CD4-positive, alpha-beta memory T cell (primary cell): ENCODE measurements at regions of chr21 and their contacts with region 1.

Region 1: GRCh38 chr21:33542640-33543504 is at the start of gene SON:
- DNase-seq: peak; percentile 96 to 99 (median 98)
- H3K4me3 ChIP-seq: peak within 1 kb of the TSS; percentile 87 to 96
- H3K4me3 Mint-ChIP-seq: peak within 1 kb of the TSS; percentile 96 to 100 (median 98)
- H3K27ac ChIP-seq: peak within 1 kb of the TSS; percentile 99
- H3K27ac Mint-ChIP-seq: peak within 1 kb of the TSS; percentile 98 to 100 (median 100)
- H3K4me1 ChIP-seq: peaks cover 52% of the 10 kb centered on the region
- H3K4me1 Mint-ChIP-seq: peaks cover 24 to 57% (median 36%) of the 10 kb centered on the region in 4 donors
- H3K27me3 ChIP-seq: no peaks in the 10 kb centered on the region
- H3K27me3 Mint-ChIP-seq: no peaks in the 10 kb centered on the region
- total RNA-seq, gene SON: 436 to 454 TPM

Region 2: DNA sequence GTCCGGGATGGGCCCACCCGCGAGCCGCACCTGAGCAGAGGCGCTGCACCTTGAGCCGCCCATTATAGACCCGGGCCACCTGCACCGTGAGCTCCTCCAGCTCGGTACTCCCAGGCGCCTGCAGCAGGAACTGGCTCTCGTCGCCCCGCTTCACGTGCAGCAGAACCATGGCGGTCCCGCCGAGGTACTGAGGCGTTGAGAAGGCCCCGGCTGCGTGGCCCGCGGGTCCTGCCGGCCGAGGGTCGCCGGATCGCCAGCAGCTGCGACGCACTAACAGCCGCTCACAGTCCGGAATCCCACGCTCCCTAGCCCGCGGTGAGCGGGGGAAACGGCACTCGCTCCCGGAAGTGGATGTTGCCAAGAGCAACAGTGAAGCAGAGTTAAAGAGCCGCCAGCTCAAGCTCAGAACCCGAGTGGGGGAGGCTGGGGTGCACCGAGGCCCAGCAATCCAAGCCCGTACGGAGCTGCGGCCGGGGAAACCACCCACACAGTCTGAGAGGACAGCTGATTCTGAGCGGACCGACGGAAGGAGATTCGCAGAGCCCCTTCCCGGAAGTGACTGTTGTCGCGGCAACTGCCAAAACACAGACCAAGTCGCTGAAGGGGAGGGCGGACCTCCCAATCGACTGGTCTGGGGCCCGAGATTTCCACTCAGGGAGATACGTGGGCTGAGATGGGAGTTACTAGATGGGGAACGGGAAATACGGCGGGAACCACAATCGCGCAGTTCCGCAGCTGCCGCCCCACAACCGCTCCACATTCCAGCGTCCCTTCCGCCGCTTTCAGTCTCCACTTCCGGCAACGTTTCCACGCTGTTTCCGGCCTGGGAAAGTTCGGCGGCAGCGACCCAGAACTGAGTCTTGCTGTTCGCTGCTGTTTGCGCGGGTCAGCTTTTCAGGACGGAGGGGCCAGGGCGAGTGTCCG is 930.5 kb before region 1 on chr21 and contains the start of gene CFAP298:
- CTCF ChIA-PET with region 1: no interaction called
- POLR2A ChIA-PET with region 1: interaction called, 8 read pairs
- intact Hi-C with region 1: loop called (anchors 1 kb)
- DNase-seq: peak; percentile 90 to 97 (median 92)
- H3K4me3 ChIP-seq: peak within 1 kb of the TSS; percentile 95 to 99
- H3K4me3 Mint-ChIP-seq: peak within 1 kb of the TSS; percentile 91 to 98 (median 96)
- H3K27ac ChIP-seq: peak within 1 kb of the TSS; percentile 86
- H3K27ac Mint-ChIP-seq: peak within 1 kb of the TSS; percentile 98 to 99 (median 99)
- H3K4me1 ChIP-seq: peaks cover 12% of the 10 kb centered on the region
- H3K4me1 Mint-ChIP-seq: peaks cover 8 to 32% (median 20%) of the 10 kb centered on the region in 4 donors
- H3K27me3 ChIP-seq: no peaks in the 10 kb centered on the region
- H3K27me3 Mint-ChIP-seq: peaks cover 1 to 2% of the 10 kb centered on the region in 2 donors
- total RNA-seq, gene CFAP298: 29.4 to 39.1 TPM

Region 3: DNA sequence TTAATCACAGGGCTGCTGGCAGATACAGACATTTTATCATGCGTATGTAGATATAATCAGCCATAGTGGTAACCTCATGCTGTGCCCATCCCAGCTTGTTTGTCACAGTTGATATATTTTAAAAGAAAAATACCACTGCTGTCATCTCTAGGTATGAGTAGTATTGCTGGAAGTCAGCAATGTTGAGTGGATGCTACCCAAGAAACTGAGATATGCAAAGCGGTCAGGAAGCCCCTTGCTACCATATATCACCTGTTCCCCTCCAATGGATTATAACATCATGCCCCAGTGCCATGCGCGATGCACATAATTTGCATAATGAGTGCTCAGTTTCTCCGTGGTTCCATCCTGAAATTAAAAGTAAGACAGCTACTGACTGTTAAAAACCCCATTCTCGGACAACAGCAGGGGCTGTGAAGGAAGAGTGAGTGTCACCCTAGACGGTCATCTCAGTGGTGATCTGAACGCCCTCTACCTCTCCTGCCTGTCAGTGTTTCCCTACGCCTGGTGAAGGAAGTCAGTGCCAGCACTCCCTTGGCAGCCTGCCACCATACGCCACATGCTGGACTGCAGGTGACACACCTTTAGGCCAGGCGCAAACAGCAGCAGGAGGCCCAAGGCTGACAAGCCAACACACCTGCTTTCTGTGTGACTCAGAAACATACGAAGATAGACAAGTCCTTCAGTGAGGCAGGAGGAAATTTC is 274.0 kb before region 1 on chr21:
- CTCF ChIA-PET with region 1: no interaction called
- POLR2A ChIA-PET with region 1: no interaction called
- intact Hi-C with region 1: no loop called
- DNase-seq: peak in 4 of 5 donors; percentile 18 to 56 (median 30)
- H3K4me3 ChIP-seq: no peak overlapping the region
- H3K4me3 Mint-ChIP-seq: peak overlapping the region; percentile 6 to 99 (median 78)
- H3K27ac ChIP-seq: peak overlapping the region; percentile 47
- H3K27ac Mint-ChIP-seq: peak overlapping the region; percentile 70 to 97 (median 87)
- H3K4me1 ChIP-seq: peaks cover 47% of the 10 kb centered on the region
- H3K4me1 Mint-ChIP-seq: peaks cover 45 to 76% (median 57%) of the 10 kb centered on the region in 4 donors
- H3K27me3 ChIP-seq: no peaks in the 10 kb centered on the region
- H3K27me3 Mint-ChIP-seq: no peaks in the 10 kb centered on the region

Region 4: DNA sequence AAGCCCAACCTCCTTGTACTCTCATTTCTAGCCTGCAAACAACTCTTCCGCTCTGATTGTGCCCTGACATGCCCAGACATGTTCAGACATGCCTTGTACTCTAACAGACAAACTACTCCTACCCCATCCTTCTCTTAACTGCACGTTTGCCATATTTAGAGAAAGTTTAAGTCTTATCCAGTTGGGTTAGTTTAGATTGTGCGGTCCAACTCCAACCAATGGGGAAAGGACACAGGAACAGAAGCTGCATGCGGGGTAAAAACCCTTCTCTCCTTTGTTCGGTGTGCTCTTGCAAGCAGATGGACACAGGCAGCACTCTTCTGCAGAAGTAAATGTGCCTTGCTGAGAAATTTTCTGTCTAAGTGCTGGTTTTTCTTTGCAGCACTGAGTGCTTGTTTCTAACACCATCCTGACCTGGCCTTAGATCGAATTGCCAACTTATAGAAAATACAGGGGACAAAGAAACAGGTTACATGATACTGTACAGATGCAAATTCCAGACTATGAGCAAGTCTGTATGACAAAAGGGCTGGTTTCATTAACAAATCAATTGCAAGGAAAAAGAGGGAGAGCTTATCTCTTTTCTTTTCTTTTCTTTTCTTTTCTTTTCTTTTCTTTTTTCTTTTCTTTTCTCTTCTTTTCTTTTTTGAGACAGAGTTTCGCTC is 175.4 kb before region 1 on chr21:
- CTCF ChIA-PET with region 1: no interaction called
- POLR2A ChIA-PET with region 1: no interaction called
- intact Hi-C with region 1: no loop called
- DNase-seq: no peak
- H3K4me3 ChIP-seq: no peak overlapping the region
- H3K4me3 Mint-ChIP-seq: no peak overlapping the region
- H3K27ac ChIP-seq: no peak overlapping the region
- H3K27ac Mint-ChIP-seq: no peak overlapping the region
- H3K4me1 ChIP-seq: peaks cover 5% of the 10 kb centered on the region
- H3K4me1 Mint-ChIP-seq: peaks cover 3 to 8% (median 4%) of the 10 kb centered on the region in 4 donors
- H3K27me3 ChIP-seq: no peaks in the 10 kb centered on the region
- H3K27me3 Mint-ChIP-seq: peaks cover 0 to 2% of the 10 kb centered on the region in 2 donors

Region 5: GRCh38 chr21:33380483-33380998 is 162.3 kb before region 1 on chr21:
- CTCF ChIA-PET with region 1: no interaction called
- POLR2A ChIA-PET with region 1: interaction called, 4 read pairs
- intact Hi-C with region 1: loop called (anchors 10 kb)
- DNase-seq: peak; percentile 68 to 93 (median 72)
- H3K4me3 ChIP-seq: no peak overlapping the region
- H3K4me3 Mint-ChIP-seq: peak overlapping the region in 7 of 8 donors; percentile 44 to 81 (median 66)
- H3K27ac ChIP-seq: peak overlapping the region; percentile 44
- H3K27ac Mint-ChIP-seq: peak overlapping the region; percentile 87 to 96 (median 91)
- H3K4me1 ChIP-seq: peaks cover 64% of the 10 kb centered on the region
- H3K4me1 Mint-ChIP-seq: peaks cover 45 to 74% (median 58%) of the 10 kb centered on the region in 4 donors
- H3K27me3 ChIP-seq: no peaks in the 10 kb centered on the region
- H3K27me3 Mint-ChIP-seq: no peaks in the 10 kb centered on the region

Region 6: GRCh38 chr21:33491373-33492102 is 51.3 kb before region 1 on chr21 and contains the start of gene DNAJC28:
- CTCF ChIA-PET with region 1: no interaction called
- POLR2A ChIA-PET with region 1: interaction called, 33 read pairs
- intact Hi-C with region 1: loop called (anchors 1 kb)
- DNase-seq: peak; percentile 92 to 97 (median 94)
- H3K4me3 ChIP-seq: peak within 1 kb of the TSS; percentile 76 to 88
- H3K4me3 Mint-ChIP-seq: peak within 1 kb of the TSS; percentile 83 to 99 (median 94)
- H3K27ac ChIP-seq: peak within 1 kb of the TSS; percentile 64
- H3K27ac Mint-ChIP-seq: peak within 1 kb of the TSS; percentile 74 to 98 (median 95)
- H3K4me1 ChIP-seq: peaks cover 4% of the 10 kb centered on the region
- H3K4me1 Mint-ChIP-seq: peaks cover 7 to 14% (median 11%) of the 10 kb centered on the region in 4 donors
- H3K27me3 ChIP-seq: no peaks in the 10 kb centered on the region
- H3K27me3 Mint-ChIP-seq: peaks cover 0 to 4% of the 10 kb centered on the region in 2 donors
- total RNA-seq, gene DNAJC28: 1.3 to 1.6 TPM

Region 7: DNA sequence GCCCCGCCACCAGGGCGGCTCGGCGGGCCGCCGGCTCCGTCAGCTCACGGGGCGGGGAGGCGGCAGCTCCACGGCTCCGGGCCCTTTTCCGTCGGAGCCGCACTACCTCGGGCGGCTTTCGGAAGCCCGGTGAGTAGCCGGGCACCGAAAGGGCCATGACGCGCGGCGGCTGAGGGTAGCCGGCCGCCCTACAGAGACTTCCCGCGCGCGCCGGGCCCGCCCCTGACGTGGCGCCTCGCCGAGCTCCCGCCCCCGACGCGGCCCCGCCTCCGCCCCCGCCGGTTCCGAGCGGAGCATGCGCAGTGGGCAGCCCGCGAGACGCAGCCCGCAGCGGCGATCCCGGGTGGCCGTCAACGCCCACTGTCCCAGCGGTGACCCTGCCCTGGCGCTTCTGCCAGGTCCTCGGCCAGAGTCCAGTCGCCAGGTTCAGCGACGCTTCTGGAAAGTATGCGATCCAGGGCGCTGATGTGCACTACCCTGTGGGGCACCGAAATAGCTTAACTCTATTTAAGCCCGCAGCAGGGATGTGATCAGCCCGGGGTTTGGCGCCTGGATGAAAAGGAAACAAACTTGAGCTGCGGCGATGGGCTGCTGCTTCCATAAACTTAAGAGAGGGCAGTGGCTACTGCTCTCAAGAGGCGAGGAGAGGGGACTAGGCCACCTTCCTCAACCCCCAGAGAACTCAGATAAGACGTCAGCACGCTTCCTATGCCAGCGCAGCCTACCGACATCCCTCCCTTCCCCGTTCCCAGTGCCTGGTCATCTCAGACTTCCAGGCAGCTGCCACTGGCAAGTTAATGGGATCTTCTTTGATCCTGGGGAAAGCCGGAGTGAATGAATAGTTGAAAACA is 45.8 kb after region 1 on chr21 and contains the start of gene DONSON:
- CTCF ChIA-PET with region 1: interaction called, 3 read pairs
- POLR2A ChIA-PET with region 1: interaction called, 38 read pairs
- intact Hi-C with region 1: loop called (anchors 1 kb)
- DNase-seq: peak; percentile 82 to 92 (median 89)
- H3K4me3 ChIP-seq: peak within 1 kb of the TSS; percentile 60 to 72
- H3K4me3 Mint-ChIP-seq: peak within 1 kb of the TSS; percentile 92 to 98 (median 94)
- H3K27ac ChIP-seq: peak within 1 kb of the TSS; percentile 78
- H3K27ac Mint-ChIP-seq: peak within 1 kb of the TSS; percentile 76 to 96 (median 95)
- H3K4me1 ChIP-seq: peaks cover 14% of the 10 kb centered on the region
- H3K4me1 Mint-ChIP-seq: peaks cover 5 to 18% (median 10%) of the 10 kb centered on the region in 4 donors
- H3K27me3 ChIP-seq: no peaks in the 10 kb centered on the region
- H3K27me3 Mint-ChIP-seq: no peaks in the 10 kb centered on the region
- total RNA-seq, gene DONSON: 11.0 to 13.7 TPM

Region 8: GRCh38 chr21:33815143-33815707 is 272.4 kb after region 1 on chr21:
- CTCF ChIA-PET with region 1: no interaction called
- POLR2A ChIA-PET with region 1: no interaction called
- intact Hi-C with region 1: no loop called
- DNase-seq: no peak
- H3K4me3 ChIP-seq: no peak overlapping the region
- H3K4me3 Mint-ChIP-seq: no peak overlapping the region
- H3K27ac ChIP-seq: no peak overlapping the region
- H3K27ac Mint-ChIP-seq: no peak overlapping the region
- H3K4me1 ChIP-seq: no peaks in the 10 kb centered on the region
- H3K4me1 Mint-ChIP-seq: no peaks in the 10 kb centered on the region
- H3K27me3 ChIP-seq: no peaks in the 10 kb centered on the region
- H3K27me3 Mint-ChIP-seq: no peaks in the 10 kb centered on the region